ENCODE measurements at regions of chr4 and their contacts with region 1.

Region 1: DNA sequence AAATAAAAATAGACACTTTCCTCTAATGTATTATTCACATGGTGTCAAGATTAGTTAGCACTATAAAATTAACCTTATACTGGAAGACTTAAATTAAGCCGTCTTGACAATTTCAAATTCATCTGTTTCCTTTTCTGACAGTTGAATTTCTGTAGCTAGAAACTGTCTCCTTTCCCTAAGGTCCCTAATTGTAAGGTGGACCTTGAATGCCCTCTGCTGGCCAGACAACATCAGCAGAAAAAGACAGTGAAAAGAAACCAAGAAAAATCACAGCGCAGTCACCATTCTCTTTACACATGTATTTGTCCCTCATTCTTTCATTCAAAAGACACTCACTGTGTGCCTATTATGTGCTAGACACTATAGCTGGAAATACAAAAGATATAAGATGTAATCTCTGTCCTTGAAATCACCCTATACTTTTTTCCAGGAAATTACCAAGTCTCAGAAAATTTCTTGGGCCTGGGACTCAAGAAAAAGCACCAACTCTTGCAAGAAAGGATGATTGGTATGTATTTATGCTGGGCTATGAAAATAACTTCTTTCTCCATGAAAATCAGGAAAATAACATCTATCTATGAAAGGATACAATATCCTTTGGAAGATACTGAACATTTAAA is 32.7 kb upstream of the AMBN start:
- DNase-seq: peak; percentile 47
- H3K4me3 ChIP-seq: no peak overlapping the region
- H3K27ac ChIP-seq: no peak overlapping the region
- H3K4me1 ChIP-seq: no peaks in the 10 kb centered on the region
- H3K27me3 ChIP-seq: no peaks in the 10 kb centered on the region
- CTCF ChIP-seq: peak; percentile 53 to 61
- POLR2A ChIP-seq: no peak

Region 2: DNA sequence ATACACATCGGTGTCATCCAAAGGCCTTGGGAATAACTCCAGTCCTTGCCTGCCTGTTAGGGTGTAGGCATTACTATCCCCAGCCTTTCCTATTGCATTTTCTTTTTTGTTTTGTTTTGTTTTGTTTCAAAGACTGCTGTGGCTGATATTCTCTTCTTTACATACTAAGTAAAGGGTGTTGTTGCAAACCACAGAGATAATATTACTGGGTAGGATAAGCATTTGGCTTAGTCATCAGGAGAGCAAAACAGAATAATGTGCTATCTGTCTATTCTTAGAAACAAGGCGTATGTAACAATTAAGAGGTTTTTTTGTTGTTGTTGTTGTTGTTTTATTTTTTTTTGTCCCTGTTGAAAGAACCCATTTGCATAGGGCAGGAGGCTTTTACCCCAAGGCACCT is 1237.3 kb before region 1 on chr4:
- CTCF ChIA-PET with region 1: interaction called, 13 read pairs
- POLR2A ChIA-PET with region 1: no interaction called
- dilution Hi-C with region 1: no loop called
- intact Hi-C with region 1: loop called (anchors 2 kb)
- DNase-seq: no peak
- H3K4me3 ChIP-seq: no peak overlapping the region
- H3K27ac ChIP-seq: no peak overlapping the region
- H3K4me1 ChIP-seq: no peaks in the 10 kb centered on the region
- H3K27me3 ChIP-seq: no peaks in the 10 kb centered on the region
- CTCF ChIP-seq: no peak
- POLR2A ChIP-seq: no peak

Region 3: DNA sequence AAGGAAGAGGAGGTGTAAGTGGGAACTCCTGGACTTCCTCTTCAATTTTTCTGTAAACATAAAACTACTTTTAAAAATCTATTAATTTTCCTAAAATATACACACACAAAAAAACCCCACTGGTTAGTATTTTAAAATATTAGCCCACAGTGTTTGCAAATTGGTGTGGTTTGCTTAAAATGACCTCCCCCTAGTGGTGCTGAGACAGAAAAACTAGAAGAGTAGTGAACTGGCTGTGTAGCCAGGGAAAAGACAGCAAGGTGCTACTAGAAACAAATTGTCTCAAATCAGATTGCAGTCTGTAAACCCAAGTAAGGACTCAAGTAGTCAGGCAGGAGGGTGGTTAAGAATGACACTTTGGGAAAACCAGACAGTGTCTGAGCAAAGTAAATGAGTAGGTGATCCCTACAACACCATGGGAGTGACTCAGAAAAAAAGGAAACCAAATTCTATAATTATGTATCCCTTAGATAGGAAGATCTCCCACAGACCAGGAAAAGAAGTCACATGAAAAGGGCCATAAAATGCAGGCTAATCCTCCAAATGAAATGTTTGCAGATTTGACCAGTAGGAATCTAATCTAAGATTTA is 14.9 kb before region 1 on chr4:
- CTCF ChIA-PET with region 1: interaction called, 12 read pairs
- POLR2A ChIA-PET with region 1: no interaction called
- dilution Hi-C with region 1: no loop called
- intact Hi-C with region 1: no loop called
- DNase-seq: peak; percentile 23
- H3K4me3 ChIP-seq: no peak overlapping the region
- H3K27ac ChIP-seq: no peak overlapping the region
- H3K4me1 ChIP-seq: no peaks in the 10 kb centered on the region
- H3K27me3 ChIP-seq: peaks cover 0 to 3% of the 10 kb centered on the region in 2 experiments
- CTCF ChIP-seq: peak; percentile 28 to 53
- POLR2A ChIP-seq: no peak